WTC11 (cell line): ENCODE measurements at regions of chr19 and their contacts with region 1.

Region 1: DNA sequence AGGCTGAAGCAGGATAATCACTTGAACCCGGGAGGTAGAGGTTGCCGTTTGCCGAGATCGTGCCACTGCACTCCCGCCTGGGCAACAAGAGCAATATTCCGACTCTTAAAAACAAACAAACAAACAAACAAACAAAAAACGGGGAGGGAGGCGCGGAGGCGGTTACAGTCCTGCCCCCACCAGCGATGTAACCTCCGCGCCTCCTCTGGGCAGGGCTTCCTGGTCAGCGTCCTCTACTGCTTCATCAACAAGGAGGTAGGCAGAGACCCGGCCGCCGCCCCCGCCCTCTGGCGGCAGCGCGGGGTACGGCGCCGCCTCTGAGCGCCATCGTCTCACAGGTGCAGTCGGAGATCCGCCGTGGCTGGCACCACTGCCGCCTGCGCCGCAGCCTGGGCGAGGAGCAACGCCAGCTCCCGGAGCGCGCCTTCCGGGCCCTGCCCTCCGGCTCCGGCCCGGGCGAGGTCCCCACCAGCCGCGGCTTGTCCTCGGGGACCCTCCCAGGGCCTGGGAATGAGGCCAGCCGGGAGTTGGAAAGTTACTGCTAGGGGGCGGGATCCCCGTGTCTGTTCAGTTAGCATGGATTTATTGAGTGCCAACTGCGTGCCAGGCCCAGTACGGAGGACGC is 10.2 kb downstream of the SNRPD2 start:
- DNase-seq: peak; percentile 93
- ATAC-seq: peak; percentile 53
- H3K4me3 Mint-ChIP-seq: peak overlapping the region; percentile 65
- H3K27ac Mint-ChIP-seq: no peak overlapping the region
- H3K4me1 Mint-ChIP-seq: peaks cover 14% of the 10 kb centered on the region
- H3K27me3 Mint-ChIP-seq: peaks cover 38% of the 10 kb centered on the region
- CTCF ChIP-seq: peak; percentile 96

Region 2: DNA sequence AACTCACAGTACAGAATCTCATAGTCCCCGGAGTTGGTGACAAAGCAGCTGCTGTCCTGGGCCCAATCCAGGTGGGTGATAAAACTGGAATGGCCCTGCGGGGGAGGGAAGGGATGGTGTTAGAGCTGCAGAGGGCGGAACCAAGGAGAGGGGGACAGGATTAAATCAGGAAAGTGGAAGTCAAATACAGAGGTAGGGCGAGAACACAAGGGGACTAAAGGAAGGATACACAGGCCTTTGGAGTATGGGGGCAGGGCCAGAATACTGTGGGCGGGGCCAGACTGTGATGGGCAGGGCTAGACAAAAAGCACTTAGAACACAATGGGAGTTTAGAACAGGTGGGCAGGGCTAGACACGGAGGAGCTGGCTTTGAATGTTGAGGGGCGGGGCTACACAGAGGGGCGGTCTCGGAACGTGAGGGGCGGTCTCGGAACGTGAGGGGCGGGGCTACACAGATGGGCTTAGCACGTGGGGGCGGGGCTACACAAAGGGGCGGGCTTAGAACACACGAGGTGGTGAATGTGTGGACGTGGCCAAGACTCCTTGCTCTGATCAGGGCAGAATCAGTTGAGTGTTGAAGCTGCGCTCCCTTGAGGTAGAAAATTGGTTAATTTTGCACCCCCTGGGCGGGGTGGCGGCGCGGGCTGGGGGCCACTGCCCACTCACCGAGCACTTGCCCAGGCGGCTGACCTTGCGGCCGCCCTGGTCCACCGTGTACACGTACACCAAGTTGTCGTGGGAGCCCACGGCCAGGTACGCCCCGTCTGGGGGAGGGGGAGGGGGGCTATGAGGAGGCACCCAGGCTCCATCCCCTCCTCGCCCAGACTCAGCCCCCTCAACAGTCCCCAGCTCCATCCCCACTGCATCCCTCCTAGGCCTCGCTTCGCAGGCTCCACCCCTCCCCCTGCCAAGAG is 65.5 kb before region 1 on chr19:
- CTCF ChIA-PET with region 1: interaction called, 11 read pairs
- POLR2A ChIA-PET with region 1: interaction called, 4 read pairs
- DNase-seq: peak; percentile 99
- ATAC-seq: peak; percentile 96
- H3K4me3 Mint-ChIP-seq: peak overlapping the region; percentile 86
- H3K27ac Mint-ChIP-seq: peak overlapping the region; percentile 99
- H3K4me1 Mint-ChIP-seq: 0 out of 2 replicates have a peak, but pooled peaks cover 7% of the 10 kb centered on the region
- H3K27me3 Mint-ChIP-seq: no peaks in the 10 kb centered on the region
- CTCF ChIP-seq: no peak

Region 3: DNA sequence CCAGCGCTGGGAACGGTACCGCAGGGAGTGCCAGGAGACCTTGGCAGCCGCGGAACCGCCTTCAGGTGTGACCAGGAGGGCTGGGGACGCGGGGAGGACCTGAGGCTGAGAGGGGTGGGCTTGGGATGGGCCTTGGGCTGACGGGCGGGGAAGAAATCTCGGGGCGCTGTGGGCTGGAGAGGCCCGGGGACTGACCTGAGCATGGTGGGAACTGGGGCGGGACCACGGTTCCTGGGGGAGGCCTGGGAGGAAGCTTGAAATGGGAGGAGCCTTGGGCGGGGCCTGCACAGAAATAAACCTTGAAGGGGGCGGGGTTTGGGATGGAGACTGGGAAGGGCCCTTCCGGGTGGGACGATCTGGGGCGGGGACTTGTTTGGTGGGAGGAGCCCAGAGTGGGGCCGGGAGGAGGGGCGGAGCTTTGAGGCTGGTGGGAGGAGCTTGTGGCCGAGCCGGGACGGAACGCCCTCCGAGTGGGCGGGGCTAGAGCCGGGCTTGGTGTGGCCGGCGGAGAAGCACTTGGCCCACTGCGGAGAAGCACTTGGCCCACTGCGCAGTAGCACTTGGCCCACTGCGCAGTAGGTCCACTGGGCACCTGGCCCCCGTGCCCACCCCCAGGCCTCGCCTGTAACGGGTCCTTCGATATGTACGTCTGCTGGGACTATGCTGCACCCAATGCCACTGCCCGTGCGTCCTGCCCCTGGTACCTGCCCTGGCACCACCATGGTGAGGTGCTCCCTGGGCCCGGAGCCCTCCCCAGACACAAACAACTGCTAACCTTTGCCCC is 10.6 kb before region 1 on chr19:
- CTCF ChIA-PET with region 1: interaction called, 27 read pairs
- POLR2A ChIA-PET with region 1: interaction called, 5 read pairs
- DNase-seq: peak; percentile 98
- ATAC-seq: peak; percentile 90
- H3K4me3 Mint-ChIP-seq: peak overlapping the region; percentile 73
- H3K27ac Mint-ChIP-seq: no peak overlapping the region
- H3K4me1 Mint-ChIP-seq: peaks cover 27% of the 10 kb centered on the region
- H3K27me3 Mint-ChIP-seq: peaks cover 72% of the 10 kb centered on the region
- CTCF ChIP-seq: no peak

Region 4: GRCh38 chr19:45705115-45705514 is 23.6 kb after region 1 on chr19:
- CTCF ChIA-PET with region 1: no interaction called
- POLR2A ChIA-PET with region 1: no interaction called
- DNase-seq: no peak
- ATAC-seq: 0 out of 2 replicates have a peak, but pooled peaks have one; percentile 13
- H3K4me3 Mint-ChIP-seq: no peak overlapping the region
- H3K27ac Mint-ChIP-seq: no peak overlapping the region; the same call in 1 of the 2 replicates
- H3K4me1 Mint-ChIP-seq: no peaks in the 10 kb centered on the region
- H3K27me3 Mint-ChIP-seq: no peaks in the 10 kb centered on the region
- CTCF ChIP-seq: no peak

Region 5: GRCh38 chr19:45834970-45835369 is 153.5 kb after region 1 on chr19:
- CTCF ChIA-PET with region 1: no interaction called
- POLR2A ChIA-PET with region 1: no interaction called
- DNase-seq: no peak
- ATAC-seq: no peak
- H3K4me3 Mint-ChIP-seq: no peak overlapping the region
- H3K27ac Mint-ChIP-seq: no peak overlapping the region
- H3K4me1 Mint-ChIP-seq: no peaks in the 10 kb centered on the region
- H3K27me3 Mint-ChIP-seq: no peaks in the 10 kb centered on the region
- CTCF ChIP-seq: no peak

Region 6: DNA sequence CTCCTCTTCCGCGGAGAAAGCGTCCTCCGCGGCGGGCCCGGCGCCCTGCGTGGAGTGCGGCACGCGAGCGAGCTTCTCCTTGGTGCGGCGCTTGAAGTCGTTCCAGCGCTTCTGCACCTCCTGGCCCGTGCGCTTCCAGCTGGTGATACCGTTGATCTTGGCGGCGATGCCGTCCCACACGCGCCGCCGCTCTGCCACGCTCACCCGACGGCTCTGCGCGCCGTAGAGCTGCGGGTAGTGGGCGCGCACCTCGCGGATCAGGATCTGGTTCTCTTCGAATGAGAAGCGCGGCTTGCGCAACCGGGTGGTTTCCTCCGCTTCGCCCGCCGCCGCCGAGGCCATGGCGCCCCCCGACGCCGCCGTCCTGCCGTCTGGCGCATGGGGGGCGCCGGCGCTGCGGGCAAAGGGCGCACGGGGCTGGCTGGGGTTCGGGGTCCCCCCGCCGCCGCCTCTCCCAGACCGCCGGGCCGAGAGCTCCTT is 220.0 kb after region 1 on chr19:
- CTCF ChIA-PET with region 1: no interaction called
- POLR2A ChIA-PET with region 1: no interaction called
- DNase-seq: peak; percentile 38
- ATAC-seq: no peak
- H3K4me3 Mint-ChIP-seq: peak overlapping the region; percentile 65
- H3K27ac Mint-ChIP-seq: no peak overlapping the region
- H3K4me1 Mint-ChIP-seq: peaks cover 12% of the 10 kb centered on the region
- H3K27me3 Mint-ChIP-seq: peaks cover 25% of the 10 kb centered on the region
- CTCF ChIP-seq: no peak

Region 7: DNA sequence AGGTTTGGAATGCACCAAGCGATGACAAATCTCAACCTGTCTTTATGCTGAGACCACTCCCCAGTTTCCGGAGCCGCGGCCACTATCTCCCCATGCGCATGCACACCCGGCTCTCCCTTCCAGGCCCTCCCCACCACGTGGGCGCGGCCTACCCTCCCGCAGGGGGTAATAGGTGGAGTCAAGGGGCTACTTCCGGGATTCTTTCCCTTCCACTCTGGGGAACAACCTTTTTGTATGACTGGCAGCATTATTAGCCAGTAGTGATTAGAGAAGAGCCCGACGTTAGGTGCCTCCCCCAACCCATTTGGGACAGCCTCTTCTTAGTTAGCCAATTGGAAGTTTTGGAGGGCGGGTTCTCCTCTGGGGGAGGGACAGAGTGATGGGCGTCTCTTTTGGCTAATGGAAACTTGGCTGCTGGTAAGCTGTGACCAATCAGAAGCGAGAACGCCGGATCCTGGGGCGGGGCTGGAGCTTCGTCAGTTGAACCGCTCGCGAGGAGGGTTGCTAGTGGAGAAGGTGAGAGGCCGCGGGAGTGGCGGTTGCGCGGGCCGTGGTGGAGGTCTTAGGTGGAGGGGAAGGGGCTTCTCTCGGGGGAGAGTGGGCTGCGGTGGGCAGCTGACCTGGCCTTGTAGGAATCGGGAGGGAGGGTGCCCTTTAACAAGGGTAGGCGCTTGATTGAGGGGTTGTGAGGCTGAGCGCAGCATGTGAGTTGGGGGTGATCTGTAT is 313.6 kb after region 1 on chr19 and contains the start of gene CCDC61:
- CTCF ChIA-PET with region 1: no interaction called
- POLR2A ChIA-PET with region 1: no interaction called
- DNase-seq: peak; percentile 97
- ATAC-seq: peak; percentile 96
- H3K4me3 Mint-ChIP-seq: no peak within 1 kb of the TSS
- H3K27ac Mint-ChIP-seq: peak within 1 kb of the TSS; percentile 34
- H3K4me1 Mint-ChIP-seq: peaks cover 16% of the 10 kb centered on the region
- H3K27me3 Mint-ChIP-seq: peaks cover 12% of the 10 kb centered on the region; the same call in 1 of the 2 replicates
- CTCF ChIP-seq: no peak
- total RNA-seq, gene CCDC61: 25.2 to 33.7 TPM (median 26.6 TPM) in 3 replicates